ENCODE measurements at regions of chr1 and their contacts with region 1.

Region 1: GRCh38 chr1:101238681-101239094 is 1.9 kb downstream of the S1PR1 start:
- DNase-seq: peak; percentile 51 to 90 (median 81)
- ATAC-seq: peak; percentile 18 to 38 (median 32)
- H3K4me3 ChIP-seq: peak overlapping the region; percentile 67 to 99
- H3K4me3 Mint-ChIP-seq: peak overlapping the region; percentile 97 to 99 (median 98)
- H3K27ac ChIP-seq: peak overlapping the region; percentile 56
- H3K27ac Mint-ChIP-seq: peak overlapping the region; percentile 98 to 100
- H3K4me1 ChIP-seq: peaks cover 44 to 50% of the 10 kb centered on the region in 2 experiments
- H3K4me1 Mint-ChIP-seq: peaks cover 60 to 64% (median 62%) of the 10 kb centered on the region in 3 donors
- H3K27me3 ChIP-seq: no peaks in the 10 kb centered on the region
- H3K27me3 Mint-ChIP-seq: no peaks in the 10 kb centered on the region

Region 2: GRCh38 chr1:101025283-101025656 is 213.4 kb before region 1 on chr1:
- CTCF ChIA-PET with region 1: interaction called in 1 of 2 experiments, 5 read pairs
- POLR2A ChIA-PET with region 1: interaction called in 1 of 2 experiments, 11 read pairs
- DNase-seq: peak in 15 of 35 experiments; percentile 1 to 36 (median 13)
- ATAC-seq: peak; percentile 44 to 58 (median 50)
- H3K4me3 ChIP-seq: peak overlapping the region; percentile 84 to 98
- H3K4me3 Mint-ChIP-seq: peak overlapping the region; percentile 92 to 96 (median 96)
- H3K27ac ChIP-seq: peak overlapping the region; percentile 81
- H3K27ac Mint-ChIP-seq: peak overlapping the region; percentile 98 to 99
- H3K4me1 ChIP-seq: peaks cover 17 to 48% of the 10 kb centered on the region in 2 experiments
- H3K4me1 Mint-ChIP-seq: peaks cover 75 to 82% (median 80%) of the 10 kb centered on the region in 3 donors
- H3K27me3 ChIP-seq: no peaks in the 10 kb centered on the region
- H3K27me3 Mint-ChIP-seq: no peaks in the 10 kb centered on the region

Region 3: GRCh38 chr1:101112051-101112780 is 126.5 kb before region 1 on chr1:
- CTCF ChIA-PET with region 1: interaction called, 9 to 21 read pairs
- POLR2A ChIA-PET with region 1: interaction called, 5 to 6 read pairs
- DNase-seq: peak; percentile 35 to 92 (median 80)
- ATAC-seq: peak; percentile 92 to 96 (median 96)
- H3K4me3 ChIP-seq: no peak overlapping the region
- H3K4me3 Mint-ChIP-seq: peak overlapping the region; percentile 60 to 73 (median 71)
- H3K27ac ChIP-seq: peak overlapping the region; percentile 85
- H3K27ac Mint-ChIP-seq: peak overlapping the region; percentile 95 to 98
- H3K4me1 ChIP-seq: peaks cover 26 to 42% of the 10 kb centered on the region in 2 experiments
- H3K4me1 Mint-ChIP-seq: peaks cover 64 to 76% (median 70%) of the 10 kb centered on the region in 3 donors
- H3K27me3 ChIP-seq: no peaks in the 10 kb centered on the region
- H3K27me3 Mint-ChIP-seq: no peaks in the 10 kb centered on the region

Region 4: GRCh38 chr1:101136739-101137138 is 101.9 kb before region 1 on chr1:
- CTCF ChIA-PET with region 1: interaction called, 3 to 11 read pairs
- POLR2A ChIA-PET with region 1: interaction called, 3 read pairs
- DNase-seq: peak in 7 of 35 experiments; percentile 6 to 72 (median 13)
- ATAC-seq: peak; percentile 69 to 83 (median 74)
- H3K4me3 ChIP-seq: no peak overlapping the region
- H3K4me3 Mint-ChIP-seq: peak overlapping the region in 2 of 3 donors; percentile 44 to 47
- H3K27ac ChIP-seq: peak overlapping the region; percentile 43
- H3K27ac Mint-ChIP-seq: peak overlapping the region; percentile 87 to 88
- H3K4me1 ChIP-seq: peaks cover 16 to 38% of the 10 kb centered on the region in 2 experiments
- H3K4me1 Mint-ChIP-seq: peaks cover 59 to 66% (median 64%) of the 10 kb centered on the region in 3 donors
- H3K27me3 ChIP-seq: no peaks in the 10 kb centered on the region
- H3K27me3 Mint-ChIP-seq: no peaks in the 10 kb centered on the region

Region 5: DNA sequence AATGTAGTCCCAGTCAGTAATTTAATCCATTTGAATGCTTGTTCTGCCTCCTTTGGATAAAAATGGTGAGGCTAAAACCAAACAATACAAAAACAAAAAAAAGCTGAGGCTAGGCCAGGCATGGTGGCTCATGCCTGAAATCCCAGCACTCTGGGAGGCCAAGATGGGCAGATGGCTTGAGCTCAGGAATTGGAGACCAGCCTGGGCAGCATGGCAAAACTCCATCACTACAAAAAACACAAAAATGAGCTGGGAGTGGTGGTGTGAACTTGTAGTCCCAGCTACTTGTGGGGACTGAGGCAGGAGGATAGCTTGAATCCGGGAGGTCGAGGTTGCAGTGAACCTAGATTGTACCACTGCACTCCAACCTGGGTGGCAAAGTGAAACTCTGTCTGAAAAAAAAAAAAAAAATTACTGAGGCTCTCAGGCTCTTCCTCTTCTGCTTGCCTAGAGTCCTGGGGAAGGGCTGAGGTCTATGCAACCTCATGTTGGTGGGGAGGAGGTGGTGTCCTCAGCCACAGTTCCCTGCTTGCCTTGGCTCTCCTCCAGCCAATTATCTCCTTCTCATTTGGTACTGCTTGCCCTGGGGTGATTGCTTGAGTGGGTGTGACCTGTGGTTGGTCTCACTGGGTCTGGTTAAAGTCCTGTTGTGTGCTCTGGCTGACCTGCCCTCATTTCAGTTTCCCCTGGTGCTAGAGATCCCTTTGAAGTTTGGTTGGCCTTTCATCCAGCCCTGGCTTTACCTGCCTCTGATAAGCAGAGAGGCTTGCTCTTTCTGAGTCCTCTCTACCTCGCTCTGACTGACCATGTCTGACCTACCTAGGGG is 19.0 kb after region 1 on chr1:
- CTCF ChIA-PET with region 1: interaction called, 5 to 14 read pairs
- POLR2A ChIA-PET with region 1: interaction called, 8 to 11 read pairs
- DNase-seq: peak in 25 of 35 experiments; percentile 12 to 65 (median 38)
- ATAC-seq: peak; percentile 69 to 74 (median 72)
- H3K4me3 ChIP-seq: no peak overlapping the region
- H3K4me3 Mint-ChIP-seq: peak overlapping the region in 2 of 3 donors; percentile 17 to 38
- H3K27ac ChIP-seq: peak overlapping the region; percentile 58
- H3K27ac Mint-ChIP-seq: peak overlapping the region; percentile 79 to 93
- H3K4me1 ChIP-seq: peaks cover 32 to 43% of the 10 kb centered on the region in 2 experiments
- H3K4me1 Mint-ChIP-seq: peaks cover 58 to 68% (median 63%) of the 10 kb centered on the region in 3 donors
- H3K27me3 ChIP-seq: no peaks in the 10 kb centered on the region
- H3K27me3 Mint-ChIP-seq: no peaks in the 10 kb centered on the region

Region 6: DNA sequence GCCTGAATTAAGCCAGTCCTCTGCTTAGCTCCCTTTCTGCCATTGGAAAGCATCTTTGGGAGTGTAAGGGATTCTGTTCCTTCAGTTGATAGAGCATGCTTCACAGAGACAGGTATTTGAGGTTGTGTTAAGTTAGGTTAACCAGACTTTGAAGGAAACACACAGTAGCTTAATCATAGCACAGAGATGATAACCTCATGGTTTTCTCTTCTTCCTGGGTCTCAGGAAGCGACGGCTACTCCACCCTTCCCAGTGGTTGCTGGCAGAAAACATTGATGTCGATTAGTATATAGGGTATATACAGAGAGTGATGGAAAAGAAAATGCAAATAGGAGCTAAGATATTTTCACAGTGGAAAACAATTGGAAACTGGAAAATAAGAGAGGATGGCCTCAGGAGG is 40.2 kb after region 1 on chr1:
- CTCF ChIA-PET with region 1: interaction called, 11 to 82 read pairs
- POLR2A ChIA-PET with region 1: interaction called, 5 to 7 read pairs
- DNase-seq: peak in 9 of 35 experiments; percentile 15 to 60 (median 25)
- ATAC-seq: peak; percentile 87 to 95 (median 92)
- H3K4me3 ChIP-seq: peak overlapping the region; percentile 11 to 36
- H3K4me3 Mint-ChIP-seq: peak overlapping the region; percentile 58 to 69 (median 67)
- H3K27ac ChIP-seq: peak overlapping the region; percentile 86
- H3K27ac Mint-ChIP-seq: peak overlapping the region; percentile 93 to 96
- H3K4me1 ChIP-seq: peaks cover 77 to 81% of the 10 kb centered on the region in 2 experiments
- H3K4me1 Mint-ChIP-seq: peaks cover 85 to 93% (median 92%) of the 10 kb centered on the region in 3 donors
- H3K27me3 ChIP-seq: no peaks in the 10 kb centered on the region
- H3K27me3 Mint-ChIP-seq: no peaks in the 10 kb centered on the region

Region 7: DNA sequence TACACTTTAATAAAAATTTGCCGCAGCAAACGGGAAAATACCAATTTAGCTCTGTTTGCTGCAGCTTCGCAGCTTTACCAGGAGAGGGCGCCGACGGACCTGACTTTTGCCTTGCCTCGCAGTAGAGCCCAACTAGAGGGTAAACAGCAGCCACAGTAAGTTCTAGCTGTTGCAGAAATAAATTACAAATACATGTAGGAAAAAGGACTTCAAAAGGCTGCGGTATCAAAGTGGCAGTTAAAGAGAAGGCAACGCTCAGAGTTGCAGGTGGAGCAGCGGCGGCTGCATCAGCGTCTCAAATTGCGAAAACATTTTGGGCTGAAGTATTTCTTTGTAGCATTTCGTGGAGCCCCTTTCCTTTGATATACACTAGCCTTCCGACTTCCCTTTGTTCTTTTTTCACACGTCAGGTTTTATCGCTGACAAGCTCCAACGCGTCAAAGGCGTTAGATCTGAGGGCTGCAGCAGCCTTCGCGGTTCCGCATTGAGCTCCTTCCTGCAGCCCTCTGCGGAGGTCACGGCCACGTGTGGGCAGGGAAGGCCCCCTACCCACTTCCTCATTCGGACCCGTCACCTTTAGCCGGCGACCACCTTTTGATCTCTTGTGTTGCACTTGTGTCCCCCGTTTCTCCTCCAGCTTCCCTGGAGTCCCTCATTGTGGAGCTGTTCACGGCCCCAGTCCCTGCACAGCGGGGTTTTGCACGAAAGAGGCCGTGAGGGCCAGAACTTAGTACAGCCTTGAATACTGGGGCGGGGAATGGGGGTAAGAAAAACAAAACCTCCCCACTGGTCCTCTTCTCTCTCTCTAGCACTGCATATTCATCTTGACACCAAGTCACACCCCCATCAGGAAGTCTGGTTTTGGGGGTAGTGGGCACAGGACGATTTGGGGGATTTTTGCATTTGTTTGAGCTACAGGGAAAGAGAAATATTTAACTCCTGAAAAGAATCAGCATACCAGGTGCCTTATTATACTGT is 70.9 kb after region 1 on chr1:
- CTCF ChIA-PET with region 1: interaction called in 1 of 2 experiments, 16 read pairs
- POLR2A ChIA-PET with region 1: interaction called, 3 to 9 read pairs
- DNase-seq: peak; percentile 56 to 93 (median 78)
- ATAC-seq: peak; percentile 79 to 82 (median 80)
- H3K4me3 ChIP-seq: peak overlapping the region; percentile 27 to 38
- H3K4me3 Mint-ChIP-seq: peak overlapping the region; percentile 78 to 79 (median 79)
- H3K27ac ChIP-seq: peak overlapping the region; percentile 90
- H3K27ac Mint-ChIP-seq: peak overlapping the region; percentile 97 to 98
- H3K4me1 ChIP-seq: peaks cover 41 to 62% of the 10 kb centered on the region in 2 experiments
- H3K4me1 Mint-ChIP-seq: peaks cover 72 to 83% (median 74%) of the 10 kb centered on the region in 3 donors
- H3K27me3 ChIP-seq: no peaks in the 10 kb centered on the region
- H3K27me3 Mint-ChIP-seq: no peaks in the 10 kb centered on the region

Region 8: GRCh38 chr1:101407505-101408211 is 169.0 kb after region 1 on chr1:
- CTCF ChIA-PET with region 1: no interaction called
- POLR2A ChIA-PET with region 1: no interaction called
- DNase-seq: no peak
- ATAC-seq: no peak
- H3K4me3 ChIP-seq: no peak overlapping the region
- H3K4me3 Mint-ChIP-seq: no peak overlapping the region
- H3K27ac ChIP-seq: no peak overlapping the region
- H3K27ac Mint-ChIP-seq: no peak overlapping the region
- H3K4me1 ChIP-seq: no peaks in the 10 kb centered on the region
- H3K4me1 Mint-ChIP-seq: peaks cover 0 to 10% (median 0%) of the 10 kb centered on the region in 3 donors
- H3K27me3 ChIP-seq: peaks cover 0 to 4% of the 10 kb centered on the region in 2 experiments
- H3K27me3 Mint-ChIP-seq: peaks cover 3 to 18% of the 10 kb centered on the region in 2 donors

Measured in T-cell (primary cell).